ENCODE measurements at regions of chr15 and their contacts with region 1.

Region 1: GRCh38 chr15:93005133-93005532 is 83.9 kb downstream of the RGMA start:
- DNase-seq: no peak
- ATAC-seq: no peak; the same call in 1 of the 2 replicates
- H3K4me3 ChIP-seq: no peak overlapping the region
- H3K27ac ChIP-seq: no peak overlapping the region
- H3K4me1 ChIP-seq: peaks cover 3% of the 10 kb centered on the region; the same call in 1 of the 2 replicates
- H3K27me3 ChIP-seq: no peaks in the 10 kb centered on the region
- CTCF ChIP-seq: no peak
- POLR2A ChIP-seq: no peak
- RAD21 ChIP-seq: no peak

Region 2: DNA sequence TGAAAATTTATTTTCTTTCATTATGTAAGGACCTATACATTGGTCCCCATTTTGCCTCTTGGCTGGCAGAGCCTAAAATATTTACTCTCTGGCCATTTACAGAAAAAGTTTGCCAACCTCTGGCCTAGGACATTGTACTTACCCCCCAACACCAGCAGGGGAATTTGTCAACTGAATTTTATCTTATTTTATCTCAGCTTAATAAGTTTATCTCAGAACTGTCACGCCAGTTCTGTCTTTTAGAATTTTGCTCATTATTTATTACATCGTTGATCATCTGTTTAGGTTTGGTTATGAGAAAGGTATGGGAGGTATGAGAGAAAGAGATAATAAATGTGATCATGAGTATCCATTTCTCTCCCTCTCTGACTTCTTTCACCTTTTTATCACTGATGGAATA is 66.7 kb before region 1 on chr15:
- CTCF ChIA-PET with region 1: no interaction called
- POLR2A ChIA-PET with region 1: no interaction called
- dilution Hi-C with region 1: no loop called
- in situ Hi-C with region 1: no loop called
- intact Hi-C with region 1: loop called (anchors 5 kb)
- DNase-seq: no peak
- ATAC-seq: no peak
- H3K4me3 ChIP-seq: no peak overlapping the region
- H3K27ac ChIP-seq: no peak overlapping the region
- H3K4me1 ChIP-seq: no peaks in the 10 kb centered on the region; the same call in 1 of the 2 replicates
- H3K27me3 ChIP-seq: no peaks in the 10 kb centered on the region
- CTCF ChIP-seq: 0 out of 2 replicates have a peak, but pooled peaks have one; percentile 8
- POLR2A ChIP-seq: no peak
- RAD21 ChIP-seq: no peak